HepG2 (cell line): ENCODE measurements at regions of chr17 and their contacts with region 1.

Region 1: GRCh38 chr17:69414408-69415274 is at the start of gene MAP2K6:
- DNase-seq: peak; percentile 77
- ATAC-seq: peak; percentile 99
- H3K4me3 ChIP-seq: peak within 1 kb of the TSS; percentile 67 to 73 (median 72)
- H3K27ac ChIP-seq: peak within 1 kb of the TSS; percentile 55
- H3K4me1 ChIP-seq: peaks cover 28% of the 10 kb centered on the region
- H3K27me3 ChIP-seq: no peaks in the 10 kb centered on the region; a peak in 1 of 5 replicates
- CTCF ChIP-seq: no peak
- EP300 ChIP-seq: peak; percentile 20 to 23; a peak in 3 of 4 replicates
- POLR2A ChIP-seq: peak; percentile 52 to 60; a peak in 2 of 4 replicates
- RAD21 ChIP-seq: no peak
- total RNA-seq, gene MAP2K6: 33.6 and 48.4 TPM in 2 replicates

Region 2: DNA sequence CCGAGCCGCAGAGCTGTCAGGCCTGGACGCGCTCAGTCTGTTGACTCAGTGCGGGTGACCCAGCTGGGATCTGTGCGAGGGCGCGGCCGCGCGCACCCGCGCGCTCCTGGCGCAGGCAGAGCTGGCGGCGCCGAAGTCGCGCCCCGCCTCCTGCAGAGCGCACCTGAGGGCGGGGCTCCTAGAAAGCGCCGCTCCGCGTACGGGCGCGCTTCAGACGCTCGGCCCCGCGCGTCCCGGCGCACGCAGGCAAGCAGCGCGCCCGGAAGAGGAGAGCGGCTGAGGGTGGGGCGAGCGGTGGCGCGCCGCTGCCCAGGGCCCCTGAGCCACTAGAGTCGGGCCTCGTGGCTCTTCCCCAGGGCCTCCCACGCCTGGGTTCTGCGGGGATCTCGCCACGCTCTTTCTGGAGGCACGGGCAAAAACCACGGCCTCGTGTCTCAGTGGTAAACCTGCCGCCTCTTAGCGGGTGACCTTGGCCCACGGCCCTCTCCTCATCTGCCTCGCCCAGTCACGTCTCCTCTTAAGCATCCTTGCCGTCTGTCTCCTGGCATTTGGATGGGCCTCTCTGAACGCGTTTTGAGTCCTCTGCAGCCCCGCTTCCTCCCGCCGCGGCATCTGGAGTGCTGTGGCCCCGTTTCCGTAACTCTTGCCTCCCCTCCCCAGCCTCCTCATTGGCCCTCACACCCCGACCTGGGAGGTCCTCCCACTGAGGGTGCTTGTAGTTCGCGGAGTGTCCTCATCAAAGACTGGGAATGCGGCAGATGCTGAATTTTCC is 87.4 kb before region 1 on chr17 and contains the start of gene ABCA5:
- CTCF ChIA-PET with region 1: no interaction called
- POLR2A ChIA-PET with region 1: interaction called, 13 read pairs
- in situ Hi-C with region 1: no loop called
- intact Hi-C with region 1: no loop called
- DNase-seq: peak; percentile 90
- ATAC-seq: peak; percentile 97
- H3K4me3 ChIP-seq: peak within 1 kb of the TSS; percentile 72 to 85 (median 82)
- H3K27ac ChIP-seq: peak within 1 kb of the TSS; percentile 55
- H3K4me1 ChIP-seq: peaks cover 34% of the 10 kb centered on the region
- H3K27me3 ChIP-seq: no peaks in the 10 kb centered on the region; a peak in 2 of 5 replicates
- CTCF ChIP-seq: no peak; the same call in 1 of the 2 replicates
- EP300 ChIP-seq: peak in 1 of 2 experiments; percentile 10; a peak in 2 of 4 replicates
- POLR2A ChIP-seq: peak; percentile 89 to 95
- RAD21 ChIP-seq: peak; percentile 55
- total RNA-seq, gene ABCA5: 6.0 and 10.1 TPM in 2 replicates

Region 3: DNA sequence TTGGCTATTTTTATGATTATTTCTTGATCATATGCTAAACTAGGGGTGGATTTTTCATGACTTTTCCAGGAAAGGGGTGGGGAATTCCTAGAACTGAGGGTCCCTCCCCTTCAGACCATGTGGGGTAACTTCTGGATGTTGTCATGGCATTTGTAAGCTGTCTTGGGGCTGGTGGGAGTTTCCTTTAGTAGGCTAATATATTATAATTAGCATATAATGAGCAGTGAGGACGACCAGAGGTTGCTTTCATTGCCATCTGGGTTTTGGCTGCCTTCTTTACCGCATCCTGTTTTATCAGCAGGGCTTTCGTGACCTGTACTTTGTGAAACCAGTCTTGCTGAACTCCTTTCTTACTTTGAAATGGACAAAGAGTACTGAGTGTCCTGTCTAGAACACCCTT is 47.3 kb before region 1 on chr17:
- CTCF ChIA-PET with region 1: no interaction called
- POLR2A ChIA-PET with region 1: no interaction called
- in situ Hi-C with region 1: no loop called
- intact Hi-C with region 1: no loop called
- DNase-seq: no peak
- ATAC-seq: no peak
- H3K4me3 ChIP-seq: no peak overlapping the region
- H3K27ac ChIP-seq: no peak overlapping the region
- H3K4me1 ChIP-seq: no peaks in the 10 kb centered on the region
- H3K27me3 ChIP-seq: no peaks in the 10 kb centered on the region; a peak in 1 of 5 replicates
- CTCF ChIP-seq: no peak
- EP300 ChIP-seq: no peak
- POLR2A ChIP-seq: no peak
- RAD21 ChIP-seq: no peak

Region 4: DNA sequence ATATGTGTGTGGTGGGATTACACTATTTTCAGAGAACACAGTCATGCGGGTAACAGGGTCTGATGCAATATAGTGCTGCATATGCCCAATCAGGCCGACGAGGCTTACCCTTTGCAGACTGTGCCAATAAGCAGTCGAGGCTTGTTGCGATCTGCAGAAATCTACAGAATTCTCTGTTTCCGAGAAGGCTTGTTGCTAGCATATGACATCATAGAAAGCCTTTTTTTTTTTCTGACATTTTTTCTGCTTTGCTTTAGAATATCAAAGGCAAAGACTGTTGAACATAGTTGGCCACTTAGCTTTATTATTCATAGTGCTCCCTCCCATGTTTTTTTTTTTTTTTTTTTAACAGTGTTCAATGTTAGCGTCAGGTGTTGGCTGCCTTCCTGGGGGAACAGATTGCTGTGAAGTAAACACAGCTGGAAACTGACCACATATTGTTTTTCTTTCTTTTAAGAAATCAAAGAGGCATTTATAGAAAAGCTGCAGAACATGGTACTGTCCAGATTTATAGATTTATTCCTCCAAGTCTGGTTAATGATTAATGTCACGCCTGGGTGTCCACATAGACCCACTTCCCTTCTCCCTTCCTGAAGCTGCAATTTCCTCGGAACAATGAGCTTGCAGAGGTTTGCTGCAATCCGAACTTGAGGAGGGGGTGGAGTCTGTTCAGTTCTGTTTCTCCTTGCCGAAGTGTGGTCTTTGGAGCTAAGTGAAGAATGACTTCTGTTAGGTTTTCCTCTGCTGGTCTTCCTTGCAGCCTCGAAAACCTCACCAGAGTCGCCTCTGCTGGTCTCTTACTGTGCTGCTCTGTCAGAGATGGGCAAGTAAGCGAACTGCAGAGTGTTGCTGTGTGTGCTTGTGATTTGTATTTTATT is 87.2 kb after region 1 on chr17:
- CTCF ChIA-PET with region 1: no interaction called
- POLR2A ChIA-PET with region 1: interaction called, 10 read pairs
- in situ Hi-C with region 1: no loop called
- intact Hi-C with region 1: loop called (anchors 5 kb)
- DNase-seq: peak; percentile 78
- ATAC-seq: peak; percentile 96
- H3K4me3 ChIP-seq: peak overlapping the region; percentile 43 to 64 (median 57)
- H3K27ac ChIP-seq: peak overlapping the region; percentile 44
- H3K4me1 ChIP-seq: peaks cover 24% of the 10 kb centered on the region
- H3K27me3 ChIP-seq: no peaks in the 10 kb centered on the region
- CTCF ChIP-seq: no peak
- EP300 ChIP-seq: no peak
- POLR2A ChIP-seq: peak in 1 of 2 experiments; percentile 34; a peak in 1 of 4 replicates
- RAD21 ChIP-seq: no peak